Left cardiac atrium (tissue), 4 donors: ENCODE measurements at regions of chr11 and their contacts with region 1.

Region 1: GRCh38 chr11:65506770-65507505 is 8.1 kb downstream of the MALAT1 start:
- DNase-seq: peak; percentile 39
- ATAC-seq: peak; percentile 19 to 42

Region 2: DNA sequence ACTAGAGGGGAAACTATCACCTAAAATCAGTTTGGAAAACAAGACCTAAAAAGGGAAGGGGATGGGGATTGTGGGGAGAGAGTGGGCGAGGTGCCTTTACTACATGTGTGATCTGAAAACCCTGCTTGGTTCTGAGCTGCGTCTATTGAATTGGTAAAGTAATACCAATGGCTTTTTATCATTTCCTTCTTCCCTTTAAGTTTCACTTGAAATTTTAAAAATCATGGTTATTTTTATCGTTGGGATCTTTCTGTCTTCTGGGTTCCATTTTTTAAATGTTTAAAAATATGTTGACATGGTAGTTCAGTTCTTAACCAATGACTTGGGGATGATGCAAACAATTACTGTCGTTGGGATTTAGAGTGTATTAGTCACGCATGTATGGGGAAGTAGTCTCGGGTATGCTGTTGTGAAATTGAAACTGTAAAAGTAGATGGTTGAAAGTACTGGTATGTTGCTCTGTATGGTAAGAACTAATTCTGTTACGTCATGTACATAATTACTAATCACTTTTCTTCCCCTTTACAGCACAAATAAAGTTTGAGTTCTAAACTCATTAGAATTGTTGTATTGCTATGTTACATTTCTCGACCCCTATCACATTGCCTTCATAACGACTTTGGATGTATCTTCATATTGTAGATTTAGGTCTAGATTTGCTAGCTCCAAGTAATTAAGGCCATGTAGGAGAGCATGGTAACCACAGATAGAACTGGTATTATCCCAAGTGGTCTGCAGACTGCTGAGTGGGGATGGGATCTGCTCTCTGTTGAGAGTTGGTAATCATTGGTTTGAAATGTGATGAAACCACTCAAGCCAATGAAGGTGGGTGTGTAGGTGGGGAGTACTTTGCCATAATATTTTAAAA is 80.7 kb before region 1 on chr11:
- intact Hi-C with region 1: loop called in 1 of 2 experiments (anchors 2 kb)
- DNase-seq: peak; percentile 22
- ATAC-seq: no peak